Panc1 (cell line): ENCODE measurements at regions of chr17 and their contacts with region 1.

Region 1: GRCh38 chr17:68377862-68378770 is 79.2 kb downstream of the WIPI1 start:
- DNase-seq: no peak
- ATAC-seq: no peak
- H3K4me3 ChIP-seq: no peak overlapping the region
- H3K27ac ChIP-seq: no peak overlapping the region
- H3K4me1 ChIP-seq: no peaks in the 10 kb centered on the region
- H3K27me3 ChIP-seq: no peaks in the 10 kb centered on the region
- CTCF ChIP-seq: no peak

Region 2: DNA sequence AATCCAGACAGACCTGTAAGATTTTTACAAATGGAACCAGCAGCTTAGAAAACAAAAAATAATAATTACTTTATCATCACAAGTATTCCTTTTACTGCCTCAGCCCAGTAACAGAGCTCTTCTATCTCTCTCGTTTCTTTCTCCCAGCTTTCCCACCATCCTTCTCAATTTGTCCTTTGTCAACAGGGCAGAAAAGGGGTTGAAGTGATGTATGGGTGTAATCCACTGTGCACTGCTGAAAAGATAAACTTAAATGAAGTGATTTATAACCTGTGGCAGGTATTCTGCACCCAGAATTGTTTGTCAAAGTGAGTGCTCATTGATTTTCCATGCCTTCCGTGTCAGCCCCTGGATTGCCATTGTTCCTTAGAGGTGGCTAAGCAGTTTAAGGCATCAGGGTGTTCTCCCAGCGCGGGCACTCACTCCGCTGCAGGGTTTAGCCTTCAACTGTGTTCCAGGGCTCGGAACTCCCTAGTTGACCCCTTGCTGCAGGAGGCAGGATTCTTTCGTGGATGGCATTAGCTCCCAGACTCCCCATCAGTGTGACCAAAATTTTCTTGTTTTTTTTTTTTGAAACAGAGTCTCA is 918.2 kb before region 1 on chr17:
- CTCF ChIA-PET with region 1: no interaction called
- POLR2A ChIA-PET with region 1: interaction called, 11 read pairs
- in situ Hi-C with region 1: no loop called
- intact Hi-C with region 1: no loop called
- DNase-seq: no peak
- ATAC-seq: no peak
- H3K4me3 ChIP-seq: no peak overlapping the region
- H3K27ac ChIP-seq: no peak overlapping the region
- H3K4me1 ChIP-seq: no peaks in the 10 kb centered on the region
- H3K27me3 ChIP-seq: no peaks in the 10 kb centered on the region
- CTCF ChIP-seq: no peak

Region 3: GRCh38 chr17:68334401-68334800 is 43.7 kb before region 1 on chr17:
- CTCF ChIA-PET with region 1: no interaction called
- POLR2A ChIA-PET with region 1: no interaction called
- in situ Hi-C with region 1: no loop called
- intact Hi-C with region 1: no loop called
- DNase-seq: no peak
- ATAC-seq: no peak
- H3K4me3 ChIP-seq: no peak overlapping the region
- H3K27ac ChIP-seq: no peak overlapping the region
- H3K4me1 ChIP-seq: no peaks in the 10 kb centered on the region
- H3K27me3 ChIP-seq: no peaks in the 10 kb centered on the region
- CTCF ChIP-seq: no peak